CD4-positive, alpha-beta T cell (primary cell): ENCODE measurements at regions of chr3 and their contacts with region 1.

Region 1: DNA sequence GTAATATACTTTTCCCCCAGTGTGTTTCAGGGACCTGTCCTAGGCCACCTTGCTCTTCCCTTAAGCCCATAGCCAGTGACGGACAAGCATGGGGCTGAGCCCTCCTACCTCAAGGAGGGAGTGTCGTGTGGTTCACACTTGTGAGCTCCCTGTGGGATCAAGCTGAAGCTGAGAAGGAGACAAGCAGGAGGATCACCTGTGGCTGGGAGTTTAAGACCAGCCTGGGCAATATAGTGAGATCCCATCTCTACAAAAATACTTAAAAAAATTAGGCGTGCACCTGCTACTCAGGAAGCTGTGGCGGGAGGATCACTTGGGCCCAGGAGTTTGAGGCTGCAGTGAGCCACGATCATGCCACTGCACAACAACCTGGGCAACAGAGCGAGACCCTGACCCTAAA is 76.7 kb upstream of the RPL35A start:
- DNase-seq: no peak
- ATAC-seq: no peak
- H3K4me3 ChIP-seq: no peak overlapping the region
- H3K4me3 Mint-ChIP-seq: no peak overlapping the region
- H3K27ac ChIP-seq: no peak overlapping the region
- H3K27ac Mint-ChIP-seq: no peak overlapping the region
- H3K4me1 ChIP-seq: peaks cover 7% of the 10 kb centered on the region
- H3K4me1 Mint-ChIP-seq: peaks cover 8% of the 10 kb centered on the region
- H3K27me3 ChIP-seq: no peaks in the 10 kb centered on the region
- H3K27me3 Mint-ChIP-seq: no peaks in the 10 kb centered on the region
- CTCF ChIP-seq: no peak

Region 2: GRCh38 chr3:197889204-197889930 is 16.0 kb after region 1 on chr3:
- CTCF ChIA-PET with region 1: no interaction called
- POLR2A ChIA-PET with region 1: no interaction called
- intact Hi-C with region 1: loop called in 1 of 2 experiments (anchors 2 kb)
- DNase-seq: no peak
- ATAC-seq: no peak
- H3K4me3 ChIP-seq: no peak overlapping the region
- H3K4me3 Mint-ChIP-seq: no peak overlapping the region
- H3K27ac ChIP-seq: no peak overlapping the region
- H3K27ac Mint-ChIP-seq: no peak overlapping the region
- H3K4me1 ChIP-seq: no peaks in the 10 kb centered on the region
- H3K4me1 Mint-ChIP-seq: no peaks in the 10 kb centered on the region
- H3K27me3 ChIP-seq: no peaks in the 10 kb centered on the region
- H3K27me3 Mint-ChIP-seq: no peaks in the 10 kb centered on the region
- CTCF ChIP-seq: no peak